Calu3 (cell line): ENCODE measurements at regions of chr2 and their contacts with region 1.

Region 1: DNA sequence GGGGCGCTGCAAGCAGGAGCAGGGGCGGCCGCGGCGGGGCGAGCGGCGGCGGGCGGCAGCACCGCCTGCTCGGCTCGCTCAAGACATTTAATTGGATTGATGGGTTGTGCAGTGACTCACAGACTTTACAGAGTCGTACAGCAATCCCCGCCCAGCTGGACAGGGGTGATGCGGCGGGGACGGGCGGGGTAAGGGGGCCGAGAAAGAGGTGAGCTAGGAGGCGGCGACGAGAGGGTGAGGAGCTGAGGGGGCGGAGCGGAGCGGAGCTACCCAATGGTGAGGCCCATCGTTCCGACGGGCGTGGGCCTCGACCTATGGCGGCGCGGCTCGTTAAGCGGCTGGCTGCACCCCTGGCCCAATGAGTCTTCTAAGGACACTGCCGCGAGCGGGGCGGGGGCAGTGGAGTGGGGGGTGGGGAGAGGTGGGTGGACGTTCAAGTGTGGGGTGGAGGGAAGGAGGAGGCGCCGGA is 97.1 kb upstream of the SERTAD2 start:
- DNase-seq: peak; percentile 98
- H3K4me3 Mint-ChIP-seq: peak overlapping the region; percentile 98
- H3K27ac Mint-ChIP-seq: peak overlapping the region; percentile 96
- H3K4me1 Mint-ChIP-seq: peaks cover 26% of the 10 kb centered on the region
- H3K27me3 Mint-ChIP-seq: no peaks in the 10 kb centered on the region
- CTCF ChIP-seq: no peak

Region 2: GRCh38 chr2:64482765-64483504 is 267.9 kb before region 1 on chr2:
- CTCF ChIA-PET with region 1: no interaction called
- intact Hi-C with region 1: no loop called
- DNase-seq: peak; percentile 40
- H3K4me3 Mint-ChIP-seq: no peak overlapping the region
- H3K27ac Mint-ChIP-seq: no peak overlapping the region
- H3K4me1 Mint-ChIP-seq: no peaks in the 10 kb centered on the region
- H3K27me3 Mint-ChIP-seq: peaks cover 26% of the 10 kb centered on the region
- CTCF ChIP-seq: no peak

Region 3: GRCh38 chr2:64586883-64587481 is 163.9 kb before region 1 on chr2:
- CTCF ChIA-PET with region 1: interaction called, 5 read pairs
- intact Hi-C with region 1: loop called (anchors 5 kb)
- DNase-seq: no peak
- H3K4me3 Mint-ChIP-seq: no peak overlapping the region
- H3K27ac Mint-ChIP-seq: no peak overlapping the region
- H3K4me1 Mint-ChIP-seq: no peaks in the 10 kb centered on the region
- H3K27me3 Mint-ChIP-seq: no peaks in the 10 kb centered on the region
- CTCF ChIP-seq: peak; percentile 39

Region 4: DNA sequence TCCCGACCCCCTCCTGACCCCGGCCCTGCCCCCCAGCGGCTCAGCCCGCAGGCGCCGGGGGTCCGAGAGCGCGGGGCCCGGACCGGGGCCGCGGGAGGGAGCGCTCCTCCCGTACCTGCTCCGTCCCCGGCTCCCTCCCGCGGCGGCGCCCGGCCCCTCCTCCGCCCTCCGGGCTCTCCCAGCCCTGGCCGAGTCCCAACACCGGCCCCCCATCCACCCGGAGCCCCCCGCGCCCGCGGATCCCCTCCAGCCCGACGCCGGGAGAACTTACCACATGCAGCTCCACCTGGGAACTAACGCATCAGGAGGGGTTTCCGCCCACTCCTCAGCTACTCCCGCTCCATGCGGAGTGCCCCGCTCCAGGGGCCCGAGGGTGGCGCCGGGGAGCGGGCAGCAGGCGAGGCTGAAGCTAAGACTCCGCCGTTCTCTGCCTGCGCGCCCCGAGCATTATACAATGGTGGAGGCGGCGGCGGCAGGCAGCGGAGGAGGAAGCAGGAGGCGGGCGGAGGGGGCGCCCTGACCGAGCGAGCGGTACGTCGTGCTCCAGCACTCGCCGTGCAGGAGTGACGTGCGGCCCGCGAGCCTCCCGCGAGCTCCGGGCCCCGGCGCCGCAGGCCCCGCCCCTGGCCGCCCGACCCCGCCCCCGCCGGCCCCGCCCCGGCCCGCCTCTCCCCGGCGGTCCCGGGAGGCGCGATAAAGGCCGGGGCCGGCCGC is 97.3 kb before region 1 on chr2 and contains the start of gene SERTAD2:
- CTCF ChIA-PET with region 1: interaction called, 21 read pairs
- intact Hi-C with region 1: no loop called
- DNase-seq: peak; percentile 90
- H3K4me3 Mint-ChIP-seq: peak within 1 kb of the TSS; percentile 78
- H3K27ac Mint-ChIP-seq: peak within 1 kb of the TSS; percentile 72
- H3K4me1 Mint-ChIP-seq: peaks cover 42% of the 10 kb centered on the region
- H3K27me3 Mint-ChIP-seq: no peaks in the 10 kb centered on the region
- CTCF ChIP-seq: peak; percentile 9
- total RNA-seq, gene SERTAD2: 19.2 and 19.4 TPM in 2 replicates

Region 5: GRCh38 chr2:64831134-64831976 is 80.5 kb after region 1 on chr2:
- CTCF ChIA-PET with region 1: interaction called, 18 read pairs
- intact Hi-C with region 1: loop called (anchors 1 kb)
- DNase-seq: peak; percentile 99
- H3K4me3 Mint-ChIP-seq: peak overlapping the region; percentile 48
- H3K27ac Mint-ChIP-seq: peak overlapping the region; percentile 97
- H3K4me1 Mint-ChIP-seq: peaks cover 52% of the 10 kb centered on the region
- H3K27me3 Mint-ChIP-seq: no peaks in the 10 kb centered on the region
- CTCF ChIP-seq: peak; percentile 90

Region 6: DNA sequence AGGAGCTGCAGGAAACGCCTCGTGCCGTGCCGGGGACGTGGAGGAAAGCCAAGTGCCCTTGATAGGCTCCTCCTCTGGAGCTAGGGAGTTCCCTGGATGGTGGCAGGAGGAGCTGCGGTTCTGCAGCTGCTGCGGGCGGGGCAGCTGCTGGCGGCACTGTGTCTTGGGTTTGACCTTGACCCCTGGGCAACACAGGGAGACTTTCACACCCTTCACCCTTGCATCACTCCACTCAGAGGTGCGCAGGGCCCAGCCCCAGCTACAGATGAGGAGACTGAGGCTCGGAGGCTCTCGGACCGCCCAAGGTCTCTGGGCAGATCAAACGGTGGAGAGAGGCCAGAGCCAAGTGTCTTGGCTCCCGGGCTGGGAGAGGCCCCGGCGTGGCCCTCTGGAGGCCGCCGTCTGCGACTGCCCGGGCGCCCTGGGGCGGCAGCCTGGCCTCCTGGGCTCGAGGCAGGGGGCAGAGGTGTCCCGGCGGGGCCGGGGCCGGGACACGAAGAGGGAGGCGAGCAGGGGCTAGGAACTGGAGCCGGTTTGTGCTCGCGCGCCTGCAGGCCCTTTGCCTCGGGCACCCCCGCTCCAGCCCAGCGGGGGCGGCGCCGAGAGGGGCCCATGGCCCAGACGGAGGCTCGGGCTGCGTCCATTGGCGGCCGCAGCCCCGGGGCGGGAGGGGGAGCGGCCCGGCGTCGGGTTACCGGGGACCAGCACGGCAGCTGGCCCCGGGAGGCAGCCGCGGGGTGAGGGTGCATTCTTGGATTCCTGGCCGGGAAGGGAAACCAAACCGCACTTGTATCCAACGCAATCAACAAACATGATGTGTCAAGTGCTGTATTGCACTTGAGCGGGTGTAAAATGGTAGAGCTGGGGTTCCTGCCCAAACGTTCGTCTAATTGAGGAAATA is 108.7 kb after region 1 on chr2:
- CTCF ChIA-PET with region 1: interaction called, 11 read pairs
- intact Hi-C with region 1: loop called (anchors 5 kb)
- DNase-seq: peak; percentile 74
- H3K4me3 Mint-ChIP-seq: peak overlapping the region; percentile 66
- H3K27ac Mint-ChIP-seq: peak overlapping the region; percentile 24
- H3K4me1 Mint-ChIP-seq: peaks cover 10% of the 10 kb centered on the region
- H3K27me3 Mint-ChIP-seq: no peaks in the 10 kb centered on the region
- CTCF ChIP-seq: no peak